RWPE1 (cell line): ENCODE measurements at regions of chr5 and their contacts with region 1.

Region 1: GRCh38 chr5:135213466-135214239 is 179.6 kb upstream of the PITX1 start:
- DNase-seq: no peak
- H3K27ac ChIP-seq: no peak overlapping the region
- CTCF ChIP-seq: no peak

Region 2: GRCh38 chr5:135085127-135085935 is 128.3 kb before region 1 on chr5:
- CTCF ChIA-PET with region 1: no interaction called
- POLR2A ChIA-PET with region 1: interaction called, 13 read pairs
- DNase-seq: peak; percentile 84
- H3K27ac ChIP-seq: peak overlapping the region; percentile 68
- CTCF ChIP-seq: no peak

Region 3: GRCh38 chr5:135120951-135121350 is 92.7 kb before region 1 on chr5:
- CTCF ChIA-PET with region 1: no interaction called
- POLR2A ChIA-PET with region 1: no interaction called
- DNase-seq: no peak
- H3K27ac ChIP-seq: no peak overlapping the region
- CTCF ChIP-seq: no peak

Region 4: GRCh38 chr5:136374003-136374402 is 1160.3 kb after region 1 on chr5:
- CTCF ChIA-PET with region 1: no interaction called
- POLR2A ChIA-PET with region 1: no interaction called
- DNase-seq: peak; percentile 41
- H3K27ac ChIP-seq: no peak overlapping the region
- CTCF ChIP-seq: no peak